Left cardiac atrium (tissue), 4 donors: ENCODE measurements at regions of chr5 and their contacts with region 1.

Region 1: DNA sequence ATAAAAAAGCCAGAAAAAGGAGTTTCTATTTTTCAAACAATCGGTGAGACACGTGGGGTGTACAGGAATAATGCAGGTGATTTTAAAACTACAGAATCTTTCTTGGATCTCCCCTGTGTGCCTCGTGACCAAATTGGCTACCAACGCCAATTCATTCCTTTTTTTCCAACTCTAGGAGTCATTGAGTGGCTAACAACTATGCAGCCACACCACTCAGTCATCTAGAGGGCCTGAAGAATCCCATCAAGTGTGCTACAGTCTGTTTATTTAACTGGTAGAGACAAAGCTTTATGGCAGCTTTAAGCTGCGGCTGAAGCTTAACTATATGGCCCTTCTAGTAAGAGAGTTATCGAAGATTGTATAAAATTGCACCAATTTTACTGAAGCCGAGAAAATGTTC is 113.1 kb upstream of the NIPBL start:
- DNase-seq: no peak
- ATAC-seq: no peak

Region 2: DNA sequence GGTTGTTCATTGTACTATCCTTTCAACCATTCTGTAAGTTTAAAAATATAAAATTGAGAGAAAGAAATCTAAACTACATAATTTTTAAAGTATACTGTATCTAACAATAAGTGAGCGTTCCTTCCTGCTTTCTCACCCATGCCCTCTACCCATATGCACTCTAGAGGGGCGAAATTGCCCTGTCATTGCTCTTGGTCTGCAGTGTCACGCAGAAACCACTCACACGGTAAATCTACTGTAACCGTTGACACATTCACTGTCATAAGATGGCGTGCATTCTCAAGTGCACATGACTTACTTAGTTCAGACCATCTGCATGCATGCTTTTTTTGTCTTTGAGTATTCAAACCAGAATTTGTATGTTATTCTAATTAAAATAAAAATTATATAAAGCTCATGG is 57.4 kb after region 1 on chr5:
- intact Hi-C with region 1: loop called in 1 of 2 experiments (anchors 10 kb)
- DNase-seq: no peak
- ATAC-seq: no peak